ENCODE measurements at regions of chr4 and their contacts with region 1.

Region 1: DNA sequence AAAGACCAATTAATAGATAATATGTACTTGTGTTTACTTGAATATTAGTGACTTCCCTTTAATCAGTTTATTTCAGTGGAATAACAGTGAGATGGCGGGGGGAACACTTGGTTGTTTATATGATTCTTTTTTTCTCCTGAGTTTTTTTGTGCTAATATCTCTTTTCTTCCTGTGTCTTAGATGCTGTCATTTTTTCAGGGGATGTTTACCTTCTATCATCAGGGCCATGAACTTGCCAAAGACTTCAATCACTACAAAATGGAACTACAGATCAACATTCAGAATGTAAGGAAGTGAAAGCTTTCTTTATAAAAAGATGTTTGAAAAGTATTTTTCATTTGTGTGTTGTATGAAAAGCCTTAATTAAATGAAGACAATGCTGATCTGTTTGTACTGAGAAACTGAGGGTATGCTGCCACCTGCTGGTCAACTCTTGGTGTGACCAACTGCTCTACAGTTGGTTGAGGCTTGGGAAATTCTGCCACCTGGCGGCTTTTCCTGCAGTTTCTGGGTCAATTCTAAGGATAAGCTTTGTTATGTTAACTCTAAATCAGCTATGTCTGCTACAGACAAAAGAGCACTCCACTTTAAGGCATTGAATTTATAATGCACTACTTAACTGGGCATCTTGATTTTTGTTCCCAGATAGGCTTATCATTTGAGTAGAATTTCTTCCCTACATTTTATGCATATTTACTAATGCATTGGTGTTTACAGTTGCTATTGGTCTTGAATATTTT is 134.8 kb downstream of the ARHGAP10 start:
- DNase-seq: peak; percentile 84 to 95 (median 90)
- ATAC-seq: peak; percentile 97 to 99 (median 97)
- H3K4me3 ChIP-seq: no peak overlapping the region
- H3K27ac ChIP-seq: no peak overlapping the region
- H3K4me1 ChIP-seq: peaks cover 0 to 6% (median 3%) of the 10 kb centered on the region in 3 donors
- H3K27me3 ChIP-seq: no peaks in the 10 kb centered on the region
- CTCF ChIP-seq: peak; percentile 94 to 100 (median 99)

Region 2: DNA sequence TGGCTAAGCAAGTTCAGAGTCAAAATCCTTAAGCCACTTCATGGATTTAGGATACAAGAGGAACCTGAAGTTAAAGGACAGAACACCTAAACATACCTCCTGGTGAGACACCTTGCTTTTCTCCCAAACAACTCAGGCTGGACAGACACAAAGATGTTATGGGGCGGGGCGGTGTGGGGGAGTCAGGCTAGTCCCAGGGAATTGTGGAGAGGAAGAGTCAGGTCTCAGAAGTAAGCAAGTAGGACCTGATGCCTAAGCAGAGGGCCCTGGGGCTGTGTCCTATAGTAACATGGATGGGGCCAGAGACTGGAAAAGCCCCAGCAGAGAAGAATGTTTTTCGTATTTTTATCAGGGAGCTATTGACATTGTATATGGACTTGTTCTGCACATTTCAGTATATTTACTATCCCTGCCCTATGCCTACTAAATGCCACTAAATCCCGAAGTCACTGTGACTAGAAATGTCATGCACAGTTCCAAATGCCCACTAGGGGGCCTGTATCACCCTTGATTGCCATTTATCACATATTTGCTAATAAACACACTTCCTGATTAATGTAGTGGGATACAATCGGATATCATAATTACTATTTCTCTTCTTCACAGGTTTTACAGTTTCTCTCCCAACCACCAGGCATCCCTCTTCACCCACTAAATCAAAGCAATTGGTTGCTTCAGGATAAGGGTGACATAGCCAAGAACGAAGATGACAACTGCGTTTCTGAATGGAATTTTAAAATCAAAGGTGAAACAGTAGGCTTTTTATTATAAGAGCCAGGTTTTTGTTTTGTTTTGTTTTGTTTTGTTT is 158.6 kb before region 1 on chr4:
- intact Hi-C with region 1: loop called in 2 of 3 experiments (anchors 5 kb)
- DNase-seq: peak in 3 of 6 donors; percentile 35 to 61 (median 46)
- ATAC-seq: peak; percentile 82 to 97 (median 90)
- H3K4me3 ChIP-seq: no peak overlapping the region
- H3K27ac ChIP-seq: no peak overlapping the region
- H3K4me1 ChIP-seq: no peaks in the 10 kb centered on the region
- H3K27me3 ChIP-seq: no peaks in the 10 kb centered on the region
- CTCF ChIP-seq: peak; percentile 86 to 90 (median 90)

Region 3: GRCh38 chr4:147723326-147723725 is 143.4 kb before region 1 on chr4:
- intact Hi-C with region 1: loop called in 1 of 3 experiments (anchors 10 kb)
- DNase-seq: no peak
- ATAC-seq: peak in 2 of 4 donors; percentile 45 to 49
- H3K4me3 ChIP-seq: no peak overlapping the region
- H3K27ac ChIP-seq: no peak overlapping the region
- H3K4me1 ChIP-seq: no peaks in the 10 kb centered on the region
- H3K27me3 ChIP-seq: no peaks in the 10 kb centered on the region
- CTCF ChIP-seq: no peak

Region 4: DNA sequence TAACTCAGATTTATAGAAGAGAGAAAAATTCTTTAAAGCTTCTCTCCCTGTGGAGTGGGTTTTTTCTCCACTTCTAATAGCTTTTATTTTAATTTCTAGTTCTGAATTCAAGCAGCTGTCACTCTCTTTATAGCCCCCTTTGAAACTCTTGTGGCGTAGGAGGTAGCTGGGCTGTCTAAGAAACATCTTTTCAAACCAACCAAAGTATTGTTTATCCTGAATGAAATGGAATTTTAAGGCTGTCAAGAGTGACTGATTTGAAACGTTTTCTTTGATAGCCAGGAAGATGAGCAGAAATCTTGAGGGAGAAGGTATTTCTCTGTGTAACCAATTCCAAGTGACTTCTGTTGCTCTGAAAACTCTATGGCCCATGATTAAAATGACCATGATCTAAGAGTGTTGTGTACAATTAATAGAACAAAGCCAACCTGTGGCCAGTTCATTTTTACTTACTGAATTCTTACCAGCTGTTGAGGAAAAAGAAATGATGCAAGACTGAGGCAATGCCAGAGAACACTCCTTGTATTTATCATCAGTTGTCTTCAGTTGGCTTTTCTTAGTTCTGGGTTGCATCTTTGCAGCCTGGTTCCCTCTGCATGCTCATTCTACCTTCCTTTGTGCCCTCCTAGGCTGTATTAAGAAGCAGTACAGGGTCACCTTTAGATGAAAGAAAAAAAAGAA is 163.6 kb after region 1 on chr4:
- intact Hi-C with region 1: no loop called
- DNase-seq: no peak
- ATAC-seq: no peak
- H3K4me3 ChIP-seq: no peak overlapping the region
- H3K27ac ChIP-seq: no peak overlapping the region
- H3K4me1 ChIP-seq: no peaks in the 10 kb centered on the region
- H3K27me3 ChIP-seq: no peaks in the 10 kb centered on the region
- CTCF ChIP-seq: no peak

Region 5: GRCh38 chr4:148044912-148045352 is 178.2 kb after region 1 on chr4:
- intact Hi-C with region 1: no loop called
- DNase-seq: no peak
- ATAC-seq: peak in 3 of 4 donors; percentile 51 to 58 (median 57)
- H3K4me3 ChIP-seq: no peak overlapping the region
- H3K27ac ChIP-seq: no peak overlapping the region
- H3K4me1 ChIP-seq: no peaks in the 10 kb centered on the region
- H3K27me3 ChIP-seq: no peaks in the 10 kb centered on the region
- CTCF ChIP-seq: no peak

Measured in pancreas (tissue), 10 donors.